B cell (primary cell): ENCODE measurements at regions of chr9 and their contacts with region 1.

Region 1: GRCh38 chr9:131178382-131178781 is 53.0 kb downstream of the NUP214 start:
- DNase-seq: peak; percentile 78
- ATAC-seq: peak; percentile 92
- H3K4me3 ChIP-seq: no peak overlapping the region
- H3K4me3 Mint-ChIP-seq: no peak overlapping the region
- H3K27ac ChIP-seq: no peak overlapping the region
- H3K27ac Mint-ChIP-seq: peak overlapping the region; percentile 38
- H3K4me1 ChIP-seq: peaks cover 36 to 40% of the 10 kb centered on the region in 2 donors
- H3K4me1 Mint-ChIP-seq: peaks cover 44% of the 10 kb centered on the region
- H3K27me3 ChIP-seq: no peaks in the 10 kb centered on the region
- H3K27me3 Mint-ChIP-seq: no peaks in the 10 kb centered on the region
- CTCF ChIP-seq: peak; percentile 98

Region 2: DNA sequence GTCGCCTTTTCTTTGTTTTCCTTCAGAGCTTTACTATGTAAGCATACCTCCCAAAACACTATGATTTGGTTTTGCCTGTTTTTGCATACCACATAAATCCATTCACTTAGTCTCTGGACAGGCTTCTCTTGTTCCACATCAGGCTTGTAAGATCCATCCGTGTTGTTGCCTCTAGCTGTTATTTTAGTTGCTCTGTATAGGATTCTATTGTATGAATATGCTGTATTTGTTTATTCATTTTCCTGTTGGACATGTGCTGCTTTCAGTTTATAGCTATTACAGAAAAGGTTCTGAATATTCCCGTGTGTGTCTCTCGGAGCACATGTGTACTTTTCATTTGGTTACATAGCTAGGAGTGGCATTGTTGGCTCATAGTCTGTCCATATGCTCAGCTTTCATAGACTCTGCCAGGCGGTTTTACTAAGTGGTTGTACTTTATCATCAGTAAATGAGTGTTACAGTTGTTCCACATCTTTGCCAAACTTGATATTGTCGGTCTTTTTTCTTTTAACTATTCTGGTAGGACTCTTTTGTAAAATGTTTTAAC is 11.2 kb before region 1 on chr9:
- CTCF ChIA-PET with region 1: interaction called, 10 read pairs
- POLR2A ChIA-PET with region 1: no interaction called
- intact Hi-C with region 1: no loop called
- DNase-seq: no peak
- ATAC-seq: no peak
- H3K4me3 ChIP-seq: no peak overlapping the region
- H3K4me3 Mint-ChIP-seq: no peak overlapping the region
- H3K27ac ChIP-seq: no peak overlapping the region
- H3K27ac Mint-ChIP-seq: no peak overlapping the region
- H3K4me1 ChIP-seq: no peaks in the 10 kb centered on the region
- H3K4me1 Mint-ChIP-seq: no peaks in the 10 kb centered on the region
- H3K27me3 ChIP-seq: no peaks in the 10 kb centered on the region
- H3K27me3 Mint-ChIP-seq: no peaks in the 10 kb centered on the region
- CTCF ChIP-seq: no peak

Region 3: DNA sequence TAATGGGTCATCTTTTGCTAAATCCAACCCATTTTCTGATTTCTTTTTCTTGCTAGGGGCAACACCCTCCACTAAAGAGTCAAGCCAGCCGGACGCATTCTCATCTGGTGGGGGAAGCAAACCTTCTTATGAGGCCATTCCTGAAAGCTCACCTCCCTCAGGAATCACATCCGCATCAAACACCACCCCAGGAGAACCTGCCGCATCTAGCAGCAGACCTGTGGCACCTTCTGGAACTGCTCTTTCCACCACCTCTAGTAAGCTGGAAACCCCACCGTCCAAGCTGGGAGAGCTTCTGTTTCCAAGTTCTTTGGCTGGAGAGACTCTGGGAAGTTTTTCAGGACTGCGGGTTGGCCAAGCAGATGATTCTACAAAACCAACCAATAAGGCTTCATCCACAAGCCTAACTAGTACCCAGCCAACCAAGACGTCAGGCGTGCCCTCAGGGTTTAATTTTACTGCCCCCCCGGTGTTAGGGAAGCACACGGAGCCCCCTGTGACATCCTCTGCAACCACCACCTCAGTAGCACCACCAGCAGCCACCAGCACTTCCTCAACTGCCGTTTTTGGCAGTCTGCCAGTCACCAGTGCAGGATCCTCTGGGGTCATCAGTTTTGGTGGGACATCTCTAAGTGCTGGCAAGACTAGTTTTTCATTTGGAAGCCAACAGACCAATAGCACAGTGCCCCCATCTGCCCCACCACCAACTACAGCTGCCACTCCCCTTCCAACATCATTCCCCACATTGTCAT is 19.0 kb after region 1 on chr9:
- CTCF ChIA-PET with region 1: interaction called, 41 read pairs
- POLR2A ChIA-PET with region 1: no interaction called
- intact Hi-C with region 1: no loop called
- DNase-seq: no peak
- ATAC-seq: no peak
- H3K4me3 ChIP-seq: no peak overlapping the region
- H3K4me3 Mint-ChIP-seq: no peak overlapping the region
- H3K27ac ChIP-seq: no peak overlapping the region
- H3K27ac Mint-ChIP-seq: no peak overlapping the region
- H3K4me1 ChIP-seq: no peaks in the 10 kb centered on the region
- H3K4me1 Mint-ChIP-seq: no peaks in the 10 kb centered on the region
- H3K27me3 ChIP-seq: no peaks in the 10 kb centered on the region
- H3K27me3 Mint-ChIP-seq: no peaks in the 10 kb centered on the region
- CTCF ChIP-seq: no peak

Region 4: GRCh38 chr9:131237931-131238401 is 59.6 kb after region 1 on chr9:
- CTCF ChIA-PET with region 1: interaction called, 6 read pairs
- POLR2A ChIA-PET with region 1: interaction called, 10 read pairs
- intact Hi-C with region 1: no loop called
- DNase-seq: peak; percentile 79
- ATAC-seq: peak; percentile 95
- H3K4me3 ChIP-seq: peak overlapping the region; percentile 27 to 65 (median 46)
- H3K4me3 Mint-ChIP-seq: peak overlapping the region; percentile 92
- H3K27ac ChIP-seq: peak overlapping the region; percentile 63 to 69
- H3K27ac Mint-ChIP-seq: peak overlapping the region; percentile 97
- H3K4me1 ChIP-seq: peaks cover 19 to 27% of the 10 kb centered on the region in 2 donors
- H3K4me1 Mint-ChIP-seq: peaks cover 20% of the 10 kb centered on the region
- H3K27me3 ChIP-seq: no peaks in the 10 kb centered on the region
- H3K27me3 Mint-ChIP-seq: no peaks in the 10 kb centered on the region
- CTCF ChIP-seq: no peak

Region 5: DNA sequence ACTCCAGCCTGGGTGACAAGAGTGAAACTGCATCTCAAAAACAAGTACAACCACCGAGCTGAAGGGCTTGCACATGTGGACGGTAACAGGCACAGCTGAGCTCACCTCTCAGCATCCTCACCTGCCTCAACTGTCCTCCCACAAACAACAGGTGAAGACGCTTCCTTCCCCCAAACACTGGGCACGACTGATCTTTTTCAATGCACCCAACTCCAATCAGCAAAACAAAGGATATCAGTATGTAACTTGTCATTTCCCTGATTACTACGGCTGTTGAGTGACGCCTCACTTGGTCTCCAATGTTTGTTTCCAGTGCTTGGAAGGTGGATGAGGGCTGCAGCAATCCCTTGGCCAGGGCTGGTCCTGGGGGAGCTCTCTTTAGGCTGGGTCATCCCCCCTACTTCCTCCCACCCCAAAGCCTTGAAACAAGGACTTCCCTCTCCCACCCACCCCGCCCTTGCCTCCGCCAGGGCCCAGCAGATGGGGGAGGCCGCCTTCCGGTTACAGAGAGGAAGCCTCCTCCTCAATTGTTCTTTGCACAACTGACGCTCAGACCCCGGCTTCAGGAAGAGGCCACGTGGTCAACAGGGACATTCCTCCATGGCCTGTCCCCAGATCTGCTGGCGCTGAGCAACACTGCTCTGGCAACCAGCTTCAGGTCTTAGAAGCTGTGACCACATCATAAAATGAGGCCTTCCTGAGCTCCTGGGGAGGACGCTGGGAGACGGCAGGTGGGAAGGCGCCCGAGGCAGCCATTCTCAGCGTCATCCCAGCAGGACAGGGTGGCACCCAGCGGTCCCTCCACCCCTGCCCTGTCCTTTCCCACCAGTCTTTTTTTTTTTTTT is 92.0 kb after region 1 on chr9:
- CTCF ChIA-PET with region 1: interaction called, 37 read pairs
- POLR2A ChIA-PET with region 1: no interaction called
- intact Hi-C with region 1: loop called (anchors 1 kb)
- DNase-seq: peak; percentile 69
- ATAC-seq: peak; percentile 15
- H3K4me3 ChIP-seq: peak overlapping the region; percentile 23 to 58 (median 49)
- H3K4me3 Mint-ChIP-seq: peak overlapping the region; percentile 83
- H3K27ac ChIP-seq: peak overlapping the region; percentile 86 to 91
- H3K27ac Mint-ChIP-seq: peak overlapping the region; percentile 96
- H3K4me1 ChIP-seq: peaks cover 75 to 90% of the 10 kb centered on the region in 2 donors
- H3K4me1 Mint-ChIP-seq: peaks cover 78% of the 10 kb centered on the region
- H3K27me3 ChIP-seq: no peaks in the 10 kb centered on the region
- H3K27me3 Mint-ChIP-seq: no peaks in the 10 kb centered on the region
- CTCF ChIP-seq: no peak

Region 6: DNA sequence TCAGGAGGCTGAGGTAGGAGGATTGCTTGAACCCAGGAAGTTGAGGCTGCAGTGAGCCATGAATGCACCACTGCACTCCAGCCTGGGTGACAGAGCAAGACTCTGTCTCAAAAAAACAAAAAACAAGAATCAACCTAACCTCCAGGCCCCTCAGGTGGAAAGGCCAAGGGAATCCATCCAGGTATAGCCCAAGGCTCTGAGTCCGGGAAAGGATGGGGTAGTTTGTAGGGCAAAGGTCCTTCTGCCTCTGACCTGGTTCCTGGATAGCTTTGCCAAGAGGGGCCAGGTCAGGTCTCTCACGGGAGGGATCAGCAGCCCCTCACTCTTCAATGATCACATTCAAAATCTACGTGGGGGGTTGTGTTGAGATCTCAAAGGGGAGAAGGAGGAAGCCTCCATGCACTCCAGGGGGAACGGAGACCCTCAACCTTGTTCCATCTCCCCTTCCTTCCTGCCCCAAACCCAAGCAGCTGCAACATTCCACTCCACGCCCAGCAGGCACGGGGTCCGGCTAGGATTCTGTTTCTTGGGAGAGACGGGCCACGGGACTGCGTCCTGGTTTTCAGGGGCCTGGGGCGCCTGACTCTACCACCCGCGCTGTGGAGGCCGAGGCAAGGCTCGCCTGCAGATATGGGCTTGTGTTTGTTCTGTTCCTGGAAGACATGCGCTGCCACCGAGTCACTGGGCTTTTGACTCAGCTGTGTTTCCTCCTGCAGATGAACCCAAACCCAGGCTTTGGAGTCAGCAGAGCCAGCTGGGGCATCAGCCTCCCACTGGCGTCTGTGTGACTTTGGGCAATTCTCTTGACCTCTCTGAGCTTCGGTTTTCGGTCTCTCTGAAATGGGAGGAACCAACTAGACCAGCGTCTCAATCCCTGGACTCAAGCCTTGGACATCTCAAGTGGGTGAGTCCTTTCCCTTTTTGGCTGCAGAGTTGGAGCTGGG is 146.6 kb after region 1 on chr9:
- CTCF ChIA-PET with region 1: interaction called, 13 read pairs
- POLR2A ChIA-PET with region 1: no interaction called
- intact Hi-C with region 1: no loop called
- DNase-seq: no peak
- ATAC-seq: no peak
- H3K4me3 ChIP-seq: no peak overlapping the region
- H3K4me3 Mint-ChIP-seq: no peak overlapping the region
- H3K27ac ChIP-seq: no peak overlapping the region
- H3K27ac Mint-ChIP-seq: no peak overlapping the region
- H3K4me1 ChIP-seq: no peaks in the 10 kb centered on the region
- H3K4me1 Mint-ChIP-seq: no peaks in the 10 kb centered on the region
- H3K27me3 ChIP-seq: no peaks in the 10 kb centered on the region
- H3K27me3 Mint-ChIP-seq: no peaks in the 10 kb centered on the region
- CTCF ChIP-seq: no peak